ENCODE measurements at regions of chr17 and their contacts with region 1.

Region 1: DNA sequence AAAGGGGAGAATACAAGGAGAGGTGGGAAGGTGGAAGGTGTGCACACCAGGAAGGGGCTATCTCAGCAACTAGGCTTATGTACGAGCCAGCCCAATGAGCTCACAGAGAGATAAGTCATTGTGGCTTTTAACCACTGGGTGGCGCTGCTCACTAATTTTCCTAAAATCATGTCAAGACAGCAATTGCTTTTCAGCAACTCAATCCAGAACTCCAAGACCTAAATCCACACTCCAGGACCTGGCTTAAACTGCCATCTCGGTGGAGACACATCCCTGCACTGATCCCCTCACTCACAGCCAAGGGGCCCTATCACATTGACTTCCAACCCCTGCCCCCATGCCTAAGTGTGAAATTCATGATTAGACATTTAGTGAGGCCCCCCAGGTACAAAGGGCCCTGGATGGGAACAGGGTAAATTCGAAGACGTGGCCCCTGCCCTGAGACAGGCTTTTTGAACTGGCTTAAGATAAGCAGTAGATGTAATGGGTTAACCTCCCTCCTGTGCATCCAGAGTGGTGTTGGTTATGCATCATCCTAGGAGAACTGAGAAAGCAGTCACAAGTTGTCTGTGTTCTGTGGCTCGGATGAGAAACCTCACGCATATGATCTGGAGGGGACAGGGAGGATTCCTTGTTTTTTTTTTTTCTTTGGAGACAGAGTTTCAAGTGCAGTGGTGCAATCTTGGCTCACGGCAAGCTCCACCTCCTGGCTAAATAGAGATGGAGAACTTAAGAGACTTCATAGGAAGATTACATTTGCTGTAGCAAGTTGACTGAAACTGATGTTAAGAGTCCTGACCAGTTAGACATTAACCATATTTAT is 11.5 kb downstream of the CCL16 start:
- DNase-seq: peak; percentile 70
- CTCF ChIP-seq: peak; percentile 85

Region 2: GRCh38 chr17:35870906-35871819 is 98.6 kb before region 1 on chr17:
- CTCF ChIA-PET with region 1: no interaction called
- POLR2A ChIA-PET with region 1: no interaction called
- DNase-seq: no peak
- CTCF ChIP-seq: no peak

Region 3: DNA sequence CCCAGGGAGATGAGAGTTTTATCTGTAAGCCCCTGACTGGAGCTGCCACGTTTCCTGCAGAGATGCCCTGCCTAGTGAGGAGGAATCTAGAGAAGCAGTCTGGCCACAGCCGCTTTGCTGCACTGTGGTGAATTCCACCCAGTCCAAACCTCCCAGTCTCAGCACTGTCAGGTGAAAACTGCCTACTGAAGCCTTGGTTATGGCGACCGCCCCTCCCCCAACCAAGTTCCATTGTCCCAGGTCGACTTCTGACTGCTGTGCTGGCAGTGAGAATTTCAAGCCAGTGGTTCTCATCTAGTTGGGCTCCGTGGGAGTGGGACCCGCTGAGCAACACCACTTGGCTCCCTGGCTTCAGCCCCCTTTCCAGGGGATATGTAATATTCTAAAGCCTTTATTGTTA is 16.0 kb before region 1 on chr17:
- CTCF ChIA-PET with region 1: interaction called, 21 read pairs
- POLR2A ChIA-PET with region 1: no interaction called
- DNase-seq: no peak
- CTCF ChIP-seq: no peak

Region 4: GRCh38 chr17:35981908-35982330 is 12.2 kb after region 1 on chr17:
- CTCF ChIA-PET with region 1: interaction called, 27 read pairs
- POLR2A ChIA-PET with region 1: no interaction called
- DNase-seq: no peak
- CTCF ChIP-seq: peak; percentile 35

Region 5: GRCh38 chr17:36148559-36149295 is 179.0 kb after region 1 on chr17:
- CTCF ChIA-PET with region 1: interaction called, 420 read pairs
- POLR2A ChIA-PET with region 1: no interaction called
- DNase-seq: peak; percentile 80
- CTCF ChIP-seq: peak; percentile 99

Region 6: GRCh38 chr17:36482611-36483504 is 513.1 kb after region 1 on chr17:
- CTCF ChIA-PET with region 1: interaction called, 10 read pairs
- POLR2A ChIA-PET with region 1: no interaction called
- DNase-seq: peak; percentile 93
- CTCF ChIP-seq: peak; percentile 97

Measured in GM10248 (cell line).